ENCODE measurements at regions of chr6 and their contacts with region 1.

Region 1: GRCh38 chr6:28136585-28137504 is 4.8 kb upstream of the ZKSCAN8 start:
- ATAC-seq: peak; percentile 70 to 78 (median 74)
- H3K4me3 ChIP-seq: peak overlapping the region; percentile 58 to 85 (median 65)
- H3K27ac ChIP-seq: peak overlapping the region; percentile 83 to 88
- H3K4me1 ChIP-seq: peaks cover 9 to 12% of the 10 kb centered on the region in 2 donors

Region 2: DNA sequence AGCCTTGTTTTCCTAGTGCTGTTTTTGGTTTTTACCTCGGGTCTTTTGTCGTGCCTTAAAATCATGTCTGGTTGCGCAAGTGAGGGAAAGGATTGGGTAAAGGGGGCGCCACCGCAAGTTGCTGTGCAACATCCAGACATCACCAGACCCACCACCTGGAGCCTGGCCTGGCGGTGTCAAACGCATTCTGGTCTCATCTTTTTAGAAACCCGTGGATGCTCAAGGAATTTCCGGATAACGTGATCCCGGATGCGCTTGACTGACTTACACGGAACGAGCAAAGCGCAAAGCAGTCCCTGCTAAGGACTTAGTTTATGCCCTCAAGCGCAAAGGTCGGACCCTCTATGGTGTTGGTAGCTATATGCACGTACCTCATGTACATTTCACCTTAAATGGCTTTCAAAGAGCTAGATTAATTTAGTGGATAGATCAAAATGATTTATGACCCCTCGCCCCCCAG is 329.8 kb before region 1 on chr6:
- in situ Hi-C with region 1: no loop called
- ATAC-seq: peak in 4 of 8 experiments; percentile 1 to 7 (median 3)
- H3K4me3 ChIP-seq: peak overlapping the region; percentile 42 to 91 (median 47)
- H3K27ac ChIP-seq: peak overlapping the region; percentile 54 to 63
- H3K4me1 ChIP-seq: peaks cover 3 to 6% of the 10 kb centered on the region in 2 donors

Region 3: DNA sequence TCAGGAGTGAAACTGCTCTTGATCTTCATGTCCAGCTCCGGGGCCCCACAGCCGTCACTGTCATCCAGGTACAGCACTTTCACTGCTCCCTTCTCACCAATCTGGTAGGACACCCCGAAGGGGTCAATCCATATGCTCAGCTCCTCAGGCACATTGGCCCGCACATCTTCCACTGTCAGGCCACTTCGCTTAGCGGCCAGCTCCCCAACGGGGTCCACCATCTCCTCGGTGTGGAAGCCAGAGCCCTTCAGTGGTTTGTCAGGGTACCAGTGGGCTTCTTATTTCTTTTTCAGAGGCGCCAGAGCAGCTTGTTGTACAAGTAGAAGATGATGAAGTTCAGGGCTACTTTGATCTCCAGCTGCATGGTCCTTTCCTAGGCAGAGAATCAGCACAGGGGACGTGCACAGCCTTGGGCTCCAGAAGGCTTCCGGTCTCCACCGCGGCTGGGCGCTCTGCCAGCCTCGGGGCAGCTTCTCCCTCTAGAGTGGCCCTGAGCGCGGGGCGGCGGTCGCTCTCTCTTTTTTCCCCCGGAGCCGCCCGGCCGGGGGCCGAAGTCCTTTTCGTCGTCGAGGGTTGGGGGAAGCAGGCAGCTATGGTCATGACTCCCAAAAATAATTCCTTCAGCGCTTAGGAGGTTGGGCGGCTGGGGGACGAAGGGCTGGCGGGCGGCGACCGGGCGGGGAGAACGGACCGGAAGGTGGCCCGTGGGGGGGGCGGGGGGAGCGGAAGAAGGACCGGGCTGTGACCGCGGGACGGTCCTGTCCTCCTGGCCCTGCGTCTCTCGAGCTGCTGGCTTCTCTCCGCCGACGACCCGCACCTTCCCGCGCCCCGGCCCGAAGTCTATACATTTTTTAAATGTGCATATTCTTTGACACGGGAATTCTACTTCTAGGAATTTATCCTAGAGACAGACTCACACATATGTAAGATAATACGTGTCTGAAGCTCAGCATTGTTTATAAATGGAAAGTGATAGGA is 81.7 kb after region 1 on chr6:
- in situ Hi-C with region 1: loop called in 1 of 9 experiments (anchors 10 kb)
- ATAC-seq: peak; percentile 78 to 96 (median 94)
- H3K4me3 ChIP-seq: peak overlapping the region; percentile 44 to 62 (median 54)
- H3K27ac ChIP-seq: peak overlapping the region in 1 of 2 donors; percentile 46
- H3K4me1 ChIP-seq: peaks cover 2 to 3% of the 10 kb centered on the region in 2 donors

Region 4: GRCh38 chr6:28266962-28267694 is 130.3 kb after region 1 on chr6 and contains the start of gene ZSCAN26:
- in situ Hi-C with region 1: loop called in 1 of 9 experiments (anchors 25 kb)
- ATAC-seq: peak; percentile 95 to 99 (median 98)
- H3K4me3 ChIP-seq: peak within 1 kb of the TSS; percentile 90 to 95 (median 92)
- H3K27ac ChIP-seq: peak within 1 kb of the TSS; percentile 80 to 90
- H3K4me1 ChIP-seq: peaks cover 0 to 12% of the 10 kb centered on the region in 2 donors
- total RNA-seq, gene ZSCAN26: 6.4 to 29.9 (median 19.2) TPM

Region 5: DNA sequence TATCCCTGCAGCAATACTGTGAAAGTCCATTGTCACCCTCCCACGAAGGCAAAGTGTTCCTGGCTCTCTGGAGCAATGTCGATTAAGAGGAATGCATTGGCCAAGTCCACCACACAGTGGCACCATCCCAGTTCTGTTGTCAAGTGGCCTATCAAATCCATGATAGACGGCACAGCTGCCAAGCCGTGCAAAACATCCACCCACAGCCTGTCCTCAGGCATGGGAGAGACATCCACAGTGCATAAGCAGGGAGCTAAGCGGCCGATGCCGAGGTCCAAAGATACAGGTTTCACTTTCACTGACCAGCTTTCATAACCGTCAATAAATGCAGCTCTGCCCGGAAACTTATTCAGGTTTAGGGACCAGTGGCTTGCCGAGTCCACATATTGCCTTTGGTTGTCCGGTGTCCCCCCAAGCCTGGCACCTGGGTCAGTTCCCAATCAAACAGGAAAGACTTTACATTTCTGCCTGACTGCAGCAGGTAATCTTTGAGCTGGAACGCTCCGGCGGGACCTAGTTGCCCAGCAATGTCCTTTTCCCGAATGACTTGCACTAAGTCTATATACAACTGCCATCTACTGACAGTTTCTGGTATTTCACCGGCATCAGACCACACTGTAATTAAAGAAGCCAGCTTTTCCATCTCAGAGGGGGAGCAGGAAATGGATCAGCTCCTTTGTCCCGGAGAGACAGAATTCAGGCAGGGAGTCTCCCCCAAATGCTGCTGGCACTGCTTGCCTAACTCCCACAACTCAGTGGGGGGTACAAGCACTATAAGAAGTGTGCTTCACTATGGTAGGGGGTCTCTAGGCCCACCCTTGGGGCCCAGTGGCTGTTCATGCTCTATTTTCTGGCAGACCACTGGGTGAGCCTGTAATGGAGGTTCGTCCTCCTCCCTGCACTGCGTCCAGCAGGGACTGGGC is 219.2 kb after region 1 on chr6:
- in situ Hi-C with region 1: loop called in 3 of 9 experiments (anchors 10 to 25 kb)
- ATAC-seq: peak; percentile 91 to 98 (median 94)
- H3K4me3 ChIP-seq: peak overlapping the region; percentile 30 to 44 (median 34)
- H3K27ac ChIP-seq: peak overlapping the region in 1 of 2 donors; percentile 54
- H3K4me1 ChIP-seq: peaks cover 2 to 8% of the 10 kb centered on the region in 2 donors